ENCODE measurements at regions of chr14 and their contacts with region 1.

Region 1: GRCh38 chr14:24036169-24036962 is 15.4 kb upstream of the CARMIL3 start:
- DNase-seq: peak; percentile 88

Region 2: GRCh38 chr14:24013654-24014514 is 22.5 kb before region 1 on chr14:
- intact Hi-C with region 1: loop called (anchors 1 kb)
- DNase-seq: no peak